Breast epithelium (tissue), 4 donors: ENCODE measurements at regions of chr12 and their contacts with region 1.

Region 1: DNA sequence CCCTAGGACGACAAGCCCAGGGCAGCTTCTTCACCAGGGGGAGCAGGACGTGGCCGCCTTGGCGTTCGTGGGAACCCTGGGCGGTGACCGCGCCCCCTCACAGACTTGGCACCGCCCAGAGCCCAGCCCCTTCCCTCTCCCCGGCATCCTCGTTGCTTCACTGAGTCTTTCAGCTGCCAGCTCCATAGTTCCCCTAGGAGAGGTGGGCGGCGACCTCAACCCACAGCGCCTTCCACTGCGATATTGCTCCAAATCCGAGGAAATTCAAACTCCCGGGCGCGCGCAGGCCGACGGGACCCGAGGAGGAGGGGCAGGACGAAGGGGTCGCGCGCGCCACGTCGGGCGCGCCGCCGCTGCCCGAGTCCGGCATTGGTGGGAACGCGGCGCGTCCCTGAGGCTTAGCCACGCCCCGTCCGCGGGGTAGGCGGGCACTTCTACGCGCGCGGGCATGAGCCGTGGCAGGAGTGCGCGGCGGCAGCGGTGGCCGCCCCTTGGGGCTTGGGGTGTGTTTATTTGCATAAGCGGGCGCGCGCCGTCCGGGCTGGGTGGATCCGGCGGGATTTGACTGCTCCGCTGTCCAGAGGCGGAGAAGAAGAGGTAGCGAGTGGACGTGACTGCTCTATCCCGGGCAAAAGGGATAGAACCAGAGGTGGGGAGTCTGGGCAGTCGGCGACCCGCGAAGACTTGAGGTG is at the starts of genes APAF1 and IKBIP:
- DNase-seq: peak; percentile 95 to 97
- H3K4me3 ChIP-seq: peak within 1 kb of the TSS; percentile 97 to 99 (median 97)
- H3K27ac ChIP-seq: peak within 1 kb of the TSS; percentile 88 to 91
- H3K4me1 ChIP-seq: no peaks in the 10 kb centered on the region
- H3K27me3 ChIP-seq: no peaks in the 10 kb centered on the region
- CTCF ChIP-seq: no peak
- POLR2A ChIP-seq: peak; percentile 42
- total RNA-seq, gene APAF1: 10.1 to 18.1 (median 16.4) TPM
- total RNA-seq, gene IKBIP: 10.7 to 19.7 (median 12.3) TPM

Region 2: GRCh38 chr12:98002712-98003493 is 642.0 kb before region 1 on chr12:
- intact Hi-C with region 1: loop called (anchors 5 kb)
- DNase-seq: peak in 1 of 2 donors; percentile 30
- H3K4me3 ChIP-seq: no peak overlapping the region
- H3K27ac ChIP-seq: no peak overlapping the region
- H3K4me1 ChIP-seq: no peaks in the 10 kb centered on the region
- H3K27me3 ChIP-seq: no peaks in the 10 kb centered on the region
- CTCF ChIP-seq: peak in 2 of 3 donors; percentile 29 to 43
- POLR2A ChIP-seq: no peak

Region 3: GRCh38 chr12:98671459-98671858 is 26.6 kb after region 1 on chr12:
- intact Hi-C with region 1: no loop called
- DNase-seq: no peak
- H3K4me3 ChIP-seq: no peak overlapping the region
- H3K27ac ChIP-seq: no peak overlapping the region
- H3K4me1 ChIP-seq: no peaks in the 10 kb centered on the region
- H3K27me3 ChIP-seq: no peaks in the 10 kb centered on the region
- CTCF ChIP-seq: no peak
- POLR2A ChIP-seq: no peak